Activated naive CD4-positive, alpha-beta T cell treated with anti-CD3 and anti-CD28 coated beads for 36 hours (primary cell): ENCODE measurements at regions of chr1 and their contacts with region 1.

Region 1: DNA sequence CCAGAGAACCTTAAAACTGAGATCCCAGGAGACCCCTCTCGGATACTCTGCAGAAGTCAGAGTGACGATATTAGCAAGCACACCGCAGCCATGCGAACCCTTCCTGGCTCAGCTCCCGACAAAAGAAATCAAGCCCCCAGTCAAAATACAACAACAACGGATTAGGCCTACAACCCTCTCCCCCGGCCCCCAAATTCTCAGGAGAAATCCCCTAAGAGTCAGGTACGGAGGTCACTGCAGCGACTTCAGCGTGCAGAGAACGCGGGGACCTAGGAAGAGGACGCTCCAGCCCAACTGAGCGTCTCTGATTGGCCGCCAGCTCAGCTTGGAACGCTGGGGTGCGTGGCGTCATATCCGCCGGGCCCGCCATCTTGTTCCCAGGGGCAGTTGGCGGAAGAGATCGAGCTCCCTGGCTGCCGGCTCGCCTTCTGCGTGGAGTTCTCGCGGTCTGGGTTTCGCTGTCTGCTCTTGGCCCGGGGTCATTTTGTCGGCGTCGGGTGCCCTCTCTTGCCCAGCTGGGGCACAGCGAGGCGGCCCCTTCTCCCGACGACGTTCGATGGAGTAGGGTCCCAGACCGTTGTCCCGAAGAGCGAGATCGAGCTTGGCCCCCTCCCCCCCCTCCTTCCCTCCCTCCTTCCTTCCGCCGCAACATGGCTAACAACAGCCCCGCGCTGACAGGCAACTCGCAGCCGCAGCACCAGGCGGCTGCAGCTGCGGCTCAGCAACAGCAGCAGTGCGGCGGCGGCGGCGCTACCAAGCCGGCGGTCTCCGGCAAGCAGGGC is at the start of gene PRPF38B:
- DNase-seq: peak; percentile 97
- H3K4me3 Mint-ChIP-seq: peak within 1 kb of the TSS; percentile 86
- H3K27ac Mint-ChIP-seq: peak within 1 kb of the TSS; percentile 98
- H3K4me1 Mint-ChIP-seq: peaks cover 37% of the 10 kb centered on the region
- H3K27me3 Mint-ChIP-seq: no peaks in the 10 kb centered on the region
- total RNA-seq, gene PRPF38B: 50.4 to 52.2 TPM

Region 2: DNA sequence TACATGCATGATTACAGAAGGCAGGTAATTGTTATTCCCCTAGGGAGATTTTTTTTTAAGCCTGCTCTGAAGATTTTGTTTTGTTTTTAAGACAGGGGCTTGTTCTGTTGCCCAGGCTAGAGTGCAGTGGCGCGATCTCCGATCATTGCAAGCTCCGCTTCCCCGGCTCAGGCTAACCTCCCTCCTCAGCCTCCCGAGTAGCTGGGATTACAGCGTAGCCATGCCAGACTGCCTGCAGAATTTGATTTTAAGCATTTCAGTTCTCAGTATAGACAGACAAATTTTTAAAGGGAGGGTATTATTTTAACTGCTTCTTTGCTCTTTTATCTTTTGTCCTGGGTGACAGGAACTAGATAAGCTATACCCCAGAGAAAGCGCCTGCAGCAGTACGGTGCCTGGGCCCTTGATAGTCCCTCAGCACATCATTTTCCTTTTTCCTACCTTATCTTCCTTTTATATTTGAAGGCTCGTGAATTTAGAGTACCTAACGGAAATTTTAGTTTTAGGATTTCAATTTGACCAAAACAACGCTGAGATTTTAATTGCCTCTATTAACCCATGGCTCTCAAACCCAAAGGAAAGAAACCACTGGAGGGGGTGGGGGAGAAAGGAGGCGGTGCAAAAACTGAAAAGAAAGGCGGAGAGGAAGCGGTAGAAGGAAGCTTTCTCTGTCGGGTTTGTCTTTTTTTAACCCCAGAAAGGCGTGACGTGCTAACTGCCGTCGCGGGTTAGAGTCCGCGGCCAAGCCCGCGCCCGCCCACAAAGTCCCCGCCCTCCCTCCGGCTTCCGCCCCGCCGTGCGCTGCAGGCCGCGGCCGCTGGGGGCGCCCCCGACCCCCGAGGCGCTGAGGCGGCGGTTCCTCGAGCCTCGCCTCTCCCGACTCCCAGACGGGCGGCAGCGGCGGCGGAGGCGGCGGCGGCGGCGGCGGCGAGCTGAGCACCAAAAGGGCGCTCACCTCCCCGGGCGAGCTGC is 132.6 kb before region 1 on chr1 and contains the start of gene EEIG2:
- CTCF ChIA-PET with region 1: interaction called, 6 read pairs
- intact Hi-C with region 1: loop called (anchors 1 kb)
- DNase-seq: peak; percentile 92
- H3K4me3 Mint-ChIP-seq: peak within 1 kb of the TSS; percentile 94
- H3K27ac Mint-ChIP-seq: peak within 1 kb of the TSS; percentile 81
- H3K4me1 Mint-ChIP-seq: peaks cover 29% of the 10 kb centered on the region
- H3K27me3 Mint-ChIP-seq: no peaks in the 10 kb centered on the region
- total RNA-seq, gene EEIG2: 7.6 to 7.9 TPM

Region 3: DNA sequence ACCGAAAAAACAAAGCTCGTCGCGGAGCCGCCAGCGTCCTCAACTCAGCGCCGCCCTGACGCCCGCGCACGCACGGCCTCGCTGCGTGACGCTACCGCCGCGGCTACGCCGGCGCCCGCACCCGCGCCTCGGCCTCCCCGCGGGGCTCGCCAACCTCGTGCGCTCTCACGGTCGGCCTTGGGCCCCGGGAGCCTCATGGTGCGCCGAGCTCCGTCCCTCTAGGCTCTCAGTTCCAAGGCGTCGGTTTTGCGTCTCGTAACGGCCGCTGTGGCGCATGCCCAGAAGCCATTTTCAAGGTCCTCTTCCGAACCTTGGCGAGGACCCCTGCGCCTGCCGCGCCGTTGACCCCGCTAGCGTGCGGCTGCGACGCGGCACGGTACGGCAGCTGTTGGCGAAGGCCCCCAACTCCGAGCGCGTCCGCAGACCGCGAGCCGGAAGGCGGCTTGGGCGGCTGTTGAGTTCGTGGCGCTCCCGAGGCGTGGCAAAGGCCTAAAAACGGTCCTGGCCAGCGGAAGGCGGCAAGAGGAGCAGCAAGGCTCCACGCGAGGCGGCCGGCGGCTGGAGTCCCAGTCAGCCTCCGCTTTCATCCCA is 31.0 kb before region 1 on chr1 and contains the start of gene HENMT1:
- CTCF ChIA-PET with region 1: interaction called, 6 read pairs
- intact Hi-C with region 1: loop called (anchors 1 kb)
- DNase-seq: peak; percentile 78
- H3K4me3 Mint-ChIP-seq: peak within 1 kb of the TSS; percentile 84
- H3K27ac Mint-ChIP-seq: peak within 1 kb of the TSS; percentile 94
- H3K4me1 Mint-ChIP-seq: peaks cover 25% of the 10 kb centered on the region
- H3K27me3 Mint-ChIP-seq: no peaks in the 10 kb centered on the region
- total RNA-seq, gene HENMT1: 18.7 to 19.3 TPM

Region 4: DNA sequence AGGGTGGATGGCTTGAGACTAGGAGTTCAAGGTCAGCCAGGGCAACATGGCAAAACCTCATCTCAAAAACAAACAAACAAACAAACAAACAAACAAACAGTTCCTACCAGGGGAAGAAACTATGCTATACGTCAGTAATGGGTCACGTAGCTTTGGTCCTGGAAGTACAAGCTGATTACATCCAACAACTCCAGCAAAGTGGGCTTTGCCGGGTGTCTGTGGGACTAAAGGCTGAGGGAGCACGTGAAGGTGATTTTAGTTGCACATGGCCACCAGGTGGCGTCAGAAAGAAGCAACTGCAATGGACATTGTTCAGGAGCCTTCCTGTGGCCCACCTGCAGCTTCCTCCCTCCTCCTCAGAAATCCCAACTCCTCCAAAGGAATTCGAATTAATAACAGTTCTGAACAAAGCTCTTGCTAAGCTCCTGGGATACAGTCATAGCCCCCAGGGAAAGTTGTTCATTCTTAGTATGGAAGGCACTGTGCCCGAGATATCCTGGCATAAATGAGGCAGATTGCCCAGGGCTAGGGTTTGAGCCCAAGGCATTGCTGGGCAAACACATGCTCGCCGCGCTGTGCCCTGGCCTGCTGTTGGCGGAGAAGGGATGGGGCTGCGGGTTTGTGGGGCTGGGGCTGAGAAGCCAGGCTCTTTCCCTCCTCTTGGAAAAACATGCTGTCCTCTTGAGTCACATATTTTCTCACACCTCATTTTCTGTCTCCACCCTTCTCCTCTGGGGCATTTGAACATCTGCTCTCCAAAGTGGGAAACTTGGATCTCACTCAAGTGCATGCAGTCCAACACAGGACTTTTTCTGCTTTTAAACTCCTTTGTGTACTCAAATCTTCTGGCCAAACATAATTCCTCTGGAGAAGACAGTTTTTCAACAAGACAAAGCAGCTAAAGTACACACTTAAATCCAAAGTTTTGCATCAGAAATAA is 136.2 kb after region 1 on chr1:
- CTCF ChIA-PET with region 1: no interaction called
- intact Hi-C with region 1: loop called (anchors 5 kb)
- DNase-seq: peak; percentile 83
- H3K4me3 Mint-ChIP-seq: no peak overlapping the region
- H3K27ac Mint-ChIP-seq: no peak overlapping the region
- H3K4me1 Mint-ChIP-seq: no peaks in the 10 kb centered on the region
- H3K27me3 Mint-ChIP-seq: no peaks in the 10 kb centered on the region

Region 5: DNA sequence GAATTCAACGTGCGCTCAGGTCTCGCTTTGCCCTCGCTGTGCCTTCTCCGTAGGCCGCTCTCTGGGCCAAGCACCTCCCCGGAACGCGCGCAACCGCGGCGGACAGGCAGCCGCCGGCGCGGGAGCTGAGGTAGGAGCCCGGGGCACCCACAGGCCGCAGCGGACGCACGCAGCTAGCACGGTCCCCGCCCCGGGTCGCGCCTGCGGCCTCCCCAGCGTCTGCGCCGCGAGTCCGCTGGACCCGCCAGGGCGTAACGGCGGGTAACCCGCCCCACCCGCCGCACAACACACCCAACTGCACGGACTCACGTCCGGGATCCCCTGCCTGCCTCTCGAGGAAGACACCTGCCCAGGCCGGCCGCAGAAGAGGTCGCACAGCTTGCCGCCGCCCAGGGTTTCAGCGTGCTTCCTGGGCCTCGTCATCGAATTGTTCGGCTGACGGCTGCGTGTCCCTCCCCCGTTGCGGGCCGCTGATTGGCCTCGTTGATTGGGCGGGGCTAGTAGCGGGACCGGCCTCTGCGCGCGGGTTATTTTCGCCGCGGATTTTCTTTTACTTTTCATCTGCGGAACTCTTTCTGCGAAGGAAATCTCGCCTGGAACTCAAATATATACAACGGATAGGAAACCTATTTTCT is 271.0 kb after region 1 on chr1 and contains the start of gene CLCC1:
- CTCF ChIA-PET with region 1: no interaction called
- intact Hi-C with region 1: loop called (anchors 2 kb)
- DNase-seq: peak; percentile 96
- H3K4me3 Mint-ChIP-seq: peak within 1 kb of the TSS; percentile 88
- H3K27ac Mint-ChIP-seq: peak within 1 kb of the TSS; percentile 87
- H3K4me1 Mint-ChIP-seq: peaks cover 26% of the 10 kb centered on the region
- H3K27me3 Mint-ChIP-seq: no peaks in the 10 kb centered on the region
- total RNA-seq, gene CLCC1: 14.3 to 15.2 TPM

Region 6: DNA sequence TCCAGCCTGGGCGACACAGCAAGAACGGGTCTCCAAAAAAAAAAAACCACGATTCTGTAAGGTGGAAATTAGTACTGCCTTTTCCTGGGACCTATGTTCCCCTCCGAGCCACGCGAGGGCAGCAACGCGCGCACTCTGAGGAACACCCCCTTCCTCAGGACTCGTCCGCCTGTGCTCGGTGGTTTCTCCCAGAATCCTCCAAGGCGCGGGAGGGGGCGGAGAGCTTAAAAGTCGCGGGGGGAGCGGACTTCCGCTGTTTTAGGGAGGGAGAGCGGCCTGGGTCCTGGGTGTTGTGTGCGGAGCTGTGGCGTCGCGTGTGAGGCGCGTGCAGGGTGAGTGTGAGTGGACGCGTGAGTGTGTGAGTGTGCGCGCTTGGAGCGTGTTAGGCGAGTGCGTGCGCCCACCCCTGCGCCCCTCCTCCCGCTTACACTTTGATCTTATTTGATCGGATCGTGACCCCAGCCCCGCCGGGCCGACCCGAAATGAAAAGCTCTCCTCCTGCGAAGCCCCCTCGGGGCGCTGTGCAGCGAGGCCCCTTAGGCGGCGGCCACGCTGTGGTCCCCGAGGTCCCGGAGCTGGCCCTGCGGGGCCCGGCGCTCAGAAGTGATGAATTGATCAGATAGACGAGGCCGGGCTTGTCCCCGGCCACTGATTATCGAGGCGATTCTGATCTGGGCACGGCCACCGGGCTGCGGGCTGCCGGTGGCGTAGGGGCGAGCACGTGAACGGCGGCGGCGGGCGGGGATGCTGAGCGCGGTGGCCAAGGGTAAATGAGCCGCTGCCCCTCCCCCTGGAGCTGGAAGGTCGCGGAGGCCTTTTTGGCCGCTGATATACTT is 408.0 kb after region 1 on chr1:
- CTCF ChIA-PET with region 1: no interaction called
- intact Hi-C with region 1: loop called (anchors 1 kb)
- DNase-seq: peak; percentile 98
- H3K4me3 Mint-ChIP-seq: peak overlapping the region; percentile 99
- H3K27ac Mint-ChIP-seq: peak overlapping the region; percentile 97
- H3K4me1 Mint-ChIP-seq: peaks cover 23% of the 10 kb centered on the region
- H3K27me3 Mint-ChIP-seq: peaks cover 2% of the 10 kb centered on the region

Region 7: DNA sequence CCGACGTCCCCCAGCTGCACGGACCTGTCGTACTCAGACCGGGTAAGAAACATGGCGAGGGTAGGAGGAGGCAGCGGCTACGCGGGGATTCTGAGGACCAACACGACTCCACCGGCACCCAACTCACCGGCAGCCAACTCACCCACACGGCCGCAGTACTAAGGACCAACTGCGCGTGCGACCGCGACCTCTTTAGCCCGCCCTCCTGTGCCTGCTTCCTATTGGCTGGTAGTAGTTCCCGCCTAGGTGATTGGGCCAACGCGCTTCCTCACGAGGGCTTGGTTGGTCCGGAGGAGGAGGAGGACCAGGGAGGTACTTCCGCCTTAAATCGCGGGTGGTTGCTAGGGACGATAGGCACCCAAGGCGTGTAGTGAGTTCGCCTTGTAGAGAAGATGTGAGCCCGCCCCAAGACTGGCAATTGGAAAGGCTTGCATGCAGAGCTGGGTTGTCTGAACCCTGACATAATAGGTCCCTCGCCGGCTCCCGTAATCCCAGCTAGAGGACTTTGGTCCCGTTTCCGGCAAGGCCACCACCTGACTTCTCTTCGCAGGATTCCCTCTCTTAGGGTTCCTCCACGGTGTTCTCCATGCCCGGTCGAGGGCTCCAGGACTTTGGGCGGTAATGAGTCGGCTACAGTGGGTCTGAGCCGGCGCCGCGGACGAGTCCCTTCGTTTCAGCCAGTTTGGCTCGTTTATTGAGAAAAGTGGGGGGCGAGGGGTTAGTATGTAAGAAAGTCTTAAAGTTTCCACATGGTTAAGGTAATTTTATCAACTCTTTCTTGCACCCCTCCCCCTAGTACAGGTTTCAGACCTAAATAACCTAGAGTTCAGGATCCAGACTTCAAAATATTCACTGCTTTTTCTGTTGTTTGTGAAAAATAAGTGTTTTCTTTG is 734.4 kb after region 1 on chr1 and contains the start of gene PSMA5:
- CTCF ChIA-PET with region 1: no interaction called
- intact Hi-C with region 1: loop called (anchors 1 kb)
- DNase-seq: peak; percentile 98
- H3K4me3 Mint-ChIP-seq: peak within 1 kb of the TSS; percentile 94
- H3K27ac Mint-ChIP-seq: peak within 1 kb of the TSS; percentile 97
- H3K4me1 Mint-ChIP-seq: peaks cover 33% of the 10 kb centered on the region
- H3K27me3 Mint-ChIP-seq: no peaks in the 10 kb centered on the region
- total RNA-seq, gene PSMA5: 181 to 202 TPM